Posterior cingulate gyrus (tissue), 11 donors: ENCODE measurements at regions of chr2 and their contacts with region 1.

Region 1: GRCh38 chr2:79860228-79861058 is 347.6 kb downstream of the CTNNA2 start:
- DNase-seq: peak in 2 of 10 donors; percentile 15 to 34

Region 2: DNA sequence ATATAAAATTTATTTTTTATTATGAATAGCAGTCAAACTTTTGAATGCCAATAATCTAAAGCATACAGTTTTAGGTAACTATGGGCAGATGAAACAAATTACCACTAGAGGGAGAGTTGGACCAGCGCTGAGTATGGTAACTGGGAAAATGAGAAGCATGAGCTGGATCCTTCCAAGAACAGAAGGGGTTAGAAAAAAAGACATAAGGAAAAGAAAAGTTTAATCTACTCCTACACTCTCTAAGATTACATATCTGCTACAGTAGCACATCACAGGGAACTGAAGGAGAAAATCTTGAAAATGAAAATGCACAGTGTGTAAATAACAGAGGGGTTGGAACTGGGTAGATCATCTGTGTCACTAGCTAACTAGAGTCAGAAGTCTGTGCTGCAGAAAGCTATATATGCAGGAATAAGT is 819.4 kb before region 1 on chr2:
- intact Hi-C with region 1: loop called (anchors 2 kb)
- DNase-seq: no peak

Region 3: DNA sequence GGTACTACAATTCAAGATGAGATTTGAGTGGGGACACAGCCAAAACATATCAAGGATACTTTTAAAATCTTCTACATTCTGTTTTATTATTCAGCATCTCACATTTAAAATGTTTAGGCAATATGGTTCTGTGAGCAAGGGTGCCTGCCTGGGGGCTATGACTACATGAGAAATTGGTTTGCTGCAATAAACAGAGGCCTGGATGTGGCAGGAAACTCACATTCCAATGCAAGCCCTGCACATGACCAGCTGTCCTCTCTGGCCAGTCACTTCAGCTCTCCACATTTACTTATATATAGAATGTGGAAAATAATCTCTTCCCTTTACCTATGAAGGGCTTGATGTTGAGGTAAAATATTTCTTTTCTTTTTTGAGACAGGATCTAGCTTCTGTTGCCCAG is 250.7 kb after region 1 on chr2:
- intact Hi-C with region 1: no loop called
- DNase-seq: no peak